ENCODE measurements at regions of chr19 and their contacts with region 1.

Region 1: DNA sequence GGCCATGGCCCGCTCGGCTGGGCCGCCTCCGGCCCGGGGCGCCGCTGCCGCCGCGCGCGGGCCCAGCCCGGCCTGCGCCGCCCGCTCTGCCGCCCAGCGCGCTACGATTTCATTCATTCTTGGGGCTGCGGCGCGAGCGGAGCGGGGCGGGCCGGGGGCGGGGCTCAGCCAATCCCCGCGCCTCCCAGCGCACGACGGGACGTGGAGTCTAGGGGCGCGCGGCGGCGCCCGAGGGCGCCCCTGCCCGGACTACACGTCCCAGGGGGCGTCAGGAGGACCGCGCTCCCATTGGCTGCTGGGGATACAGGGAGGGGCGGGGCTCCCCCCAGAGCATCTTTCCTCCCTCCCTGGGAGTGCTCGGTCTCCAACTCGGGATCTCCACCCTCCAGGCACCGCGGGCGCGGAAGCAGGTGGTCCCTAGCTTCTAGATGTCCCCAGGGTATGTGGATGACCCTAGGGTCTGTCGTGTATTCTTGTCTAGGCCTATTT is 5.6 kb upstream of the DPF1 start:
- DNase-seq: peak; percentile 91
- H3K4me3 ChIP-seq: peak overlapping the region; percentile 54
- H3K27ac ChIP-seq: no peak overlapping the region
- H3K4me1 ChIP-seq: no peaks in the 10 kb centered on the region
- H3K27me3 ChIP-seq: peaks cover 2% of the 10 kb centered on the region
- CTCF ChIP-seq: no peak

Region 2: GRCh38 chr19:38122402-38123093 is 107.1 kb before region 1 on chr19:
- CTCF ChIA-PET with region 1: interaction called, 11 read pairs
- POLR2A ChIA-PET with region 1: no interaction called
- intact Hi-C with region 1: no loop called
- DNase-seq: no peak
- H3K4me3 ChIP-seq: no peak overlapping the region
- H3K27ac ChIP-seq: no peak overlapping the region
- H3K4me1 ChIP-seq: no peaks in the 10 kb centered on the region
- H3K27me3 ChIP-seq: no peaks in the 10 kb centered on the region
- CTCF ChIP-seq: no peak

Region 3: DNA sequence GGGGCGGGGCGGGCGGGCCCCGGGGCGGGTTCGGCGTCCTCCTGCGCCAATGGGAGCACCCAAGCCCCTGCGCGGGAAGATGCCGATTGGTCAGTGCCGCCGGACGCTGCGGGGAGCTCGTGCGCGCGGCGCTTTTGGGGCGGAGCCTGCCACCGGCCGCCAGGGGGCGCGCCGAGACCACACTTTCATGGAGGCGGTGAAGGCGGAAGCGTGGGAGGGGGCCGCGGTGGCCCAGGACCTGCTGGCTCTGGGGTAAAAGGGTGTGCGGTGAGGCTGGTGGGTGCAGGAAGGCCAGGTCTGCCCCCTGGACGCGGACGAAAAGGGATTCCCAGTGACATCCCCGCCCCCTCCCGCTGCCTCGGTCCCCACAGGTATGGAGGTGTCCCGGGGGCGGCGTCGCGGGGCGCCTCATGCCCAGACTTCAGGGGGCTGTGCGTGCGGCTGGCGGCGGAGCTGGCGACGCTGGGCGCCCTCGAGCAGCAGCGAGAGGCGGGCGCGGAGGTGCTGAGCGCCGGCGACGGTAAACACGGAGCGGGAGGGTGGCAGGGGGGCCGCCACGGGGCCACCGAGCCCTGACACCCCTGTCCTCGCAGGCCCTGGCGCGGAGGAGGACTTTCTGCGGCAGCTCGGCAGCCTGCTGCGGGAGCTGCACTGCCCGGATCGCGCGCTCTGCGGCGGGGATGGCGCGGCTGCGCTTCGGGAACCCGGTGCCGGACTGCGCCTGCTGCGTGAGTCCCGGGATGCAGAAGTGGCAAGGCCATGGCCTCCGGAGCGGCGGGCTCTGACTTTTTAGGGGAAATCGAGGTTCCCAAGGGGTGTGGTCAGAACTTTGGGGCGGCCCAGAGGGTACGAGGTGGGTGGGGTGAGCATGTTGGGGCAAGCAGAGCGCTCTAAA is 173.6 kb after region 1 on chr19 and contains the start of gene FAM98C:
- CTCF ChIA-PET with region 1: no interaction called
- POLR2A ChIA-PET with region 1: no interaction called
- intact Hi-C with region 1: loop called (anchors 10 kb)
- DNase-seq: peak; percentile 98
- H3K4me3 ChIP-seq: peak within 1 kb of the TSS; percentile 87
- H3K27ac ChIP-seq: peak within 1 kb of the TSS; percentile 70
- H3K4me1 ChIP-seq: no peaks in the 10 kb centered on the region
- H3K27me3 ChIP-seq: no peaks in the 10 kb centered on the region
- CTCF ChIP-seq: peak; percentile 93
- total RNA-seq, gene FAM98C: 11.8 and 12.1 TPM in 2 replicates